Panc1 (cell line): ENCODE measurements at regions of chr21 and their contacts with region 1.

Region 1: GRCh38 chr21:29538115-29538514 is 239.4 kb downstream of the BACH1 start:
- DNase-seq: no peak
- ATAC-seq: no peak
- H3K4me3 ChIP-seq: no peak overlapping the region
- H3K27ac ChIP-seq: no peak overlapping the region
- H3K4me1 ChIP-seq: no peaks in the 10 kb centered on the region
- H3K27me3 ChIP-seq: no peaks in the 10 kb centered on the region
- CTCF ChIP-seq: no peak

Region 2: DNA sequence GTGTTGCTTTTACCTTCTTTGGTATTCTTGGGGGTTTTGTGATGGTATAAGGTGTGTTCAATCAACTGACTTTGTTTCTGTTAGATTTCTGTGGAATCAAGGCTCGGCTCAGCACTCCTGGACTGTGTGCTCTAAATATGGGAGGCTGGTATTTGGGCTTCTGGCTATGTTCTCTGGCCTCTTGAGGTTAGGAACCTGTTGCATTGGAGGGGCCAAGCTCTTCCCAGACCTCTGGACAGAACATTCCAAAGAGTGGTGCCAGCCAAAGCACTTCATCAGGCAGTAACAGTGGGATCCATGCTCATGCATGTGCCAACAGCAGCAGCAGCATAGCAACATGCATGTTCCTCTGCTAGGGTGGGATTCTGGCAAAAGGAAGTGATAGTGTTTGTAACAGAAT is 1014.7 kb after region 1 on chr21:
- CTCF ChIA-PET with region 1: no interaction called
- POLR2A ChIA-PET with region 1: interaction called, 14 read pairs
- in situ Hi-C with region 1: no loop called
- intact Hi-C with region 1: no loop called
- DNase-seq: no peak
- ATAC-seq: no peak
- H3K4me3 ChIP-seq: no peak overlapping the region
- H3K27ac ChIP-seq: no peak overlapping the region
- H3K4me1 ChIP-seq: no peaks in the 10 kb centered on the region
- H3K27me3 ChIP-seq: no peaks in the 10 kb centered on the region
- CTCF ChIP-seq: no peak